Activated T-helper 2 cell treated with anti-CD3 and anti-CD28 coated beads, Interferon-gamma antibody, Interleukin-2, Interleukin-4, amounts not matched to agents 10 μg/mL and 5 μg/mL and 100 μg/mL, durations not matched to agents 14 hours and 24 hours and 36 hours (primary cell): ENCODE measurements at regions of chr3 and their contacts with region 1.

Region 1: GRCh38 chr3:53513556-53514190 is 19.3 kb downstream of the CACNA1D start:
- DNase-seq: no peak
- H3K4me3 Mint-ChIP-seq: no peak overlapping the region
- H3K27ac Mint-ChIP-seq: no peak overlapping the region
- H3K4me1 Mint-ChIP-seq: no peaks in the 10 kb centered on the region
- H3K27me3 Mint-ChIP-seq: peaks cover 21% of the 10 kb centered on the region

Region 2: DNA sequence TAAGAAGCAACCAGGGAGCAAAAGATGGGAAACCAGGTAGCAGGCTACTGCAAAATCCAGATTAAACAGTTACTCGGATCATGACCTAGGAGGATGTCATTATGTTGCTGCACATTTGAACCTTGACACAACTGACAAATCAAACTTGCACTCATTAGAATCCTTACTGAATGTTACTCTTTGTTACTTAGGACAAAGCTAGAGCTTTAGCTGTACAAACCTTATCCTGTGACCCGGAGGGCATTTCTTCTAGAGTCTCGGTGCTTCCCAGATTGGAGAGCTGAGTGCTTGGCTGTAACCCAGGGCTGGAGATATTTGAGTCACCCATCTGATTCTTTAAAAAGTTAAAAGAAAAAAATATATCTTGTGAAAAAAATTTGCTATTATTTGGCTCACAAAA is 209.7 kb before region 1 on chr3:
- intact Hi-C with region 1: loop called (anchors 5 kb)
- DNase-seq: no peak
- H3K4me3 Mint-ChIP-seq: no peak overlapping the region
- H3K27ac Mint-ChIP-seq: no peak overlapping the region
- H3K4me1 Mint-ChIP-seq: no peaks in the 10 kb centered on the region
- H3K27me3 Mint-ChIP-seq: no peaks in the 10 kb centered on the region

Region 3: GRCh38 chr3:53534676-53535400 is 21.2 kb after region 1 on chr3:
- intact Hi-C with region 1: no loop called
- DNase-seq: no peak
- H3K4me3 Mint-ChIP-seq: no peak overlapping the region
- H3K27ac Mint-ChIP-seq: no peak overlapping the region
- H3K4me1 Mint-ChIP-seq: no peaks in the 10 kb centered on the region
- H3K27me3 Mint-ChIP-seq: peaks cover 42% of the 10 kb centered on the region